ENCODE measurements at regions of chr1 and their contacts with region 1.

Region 1: GRCh38 chr1:109112652-109113285 is 1.1 kb upstream of the ELAPOR1 start:
- DNase-seq: peak; percentile 80 to 84
- ATAC-seq: peak; percentile 94 to 98
- H3K4me3 ChIP-seq: peak overlapping the region; percentile 37
- H3K27ac ChIP-seq: peak overlapping the region; percentile 16 to 71; a peak in 2 of 6 replicates
- H3K4me1 ChIP-seq: peaks cover 17% of the 10 kb centered on the region; the same call in 2 of the 3 replicates
- CTCF ChIP-seq: peak; percentile 80
- EP300 ChIP-seq: no peak
- POLR2A ChIP-seq: no peak
- RAD21 ChIP-seq: peak; percentile 59 to 60

Region 2: GRCh38 chr1:109090196-109091077 is 22.3 kb before region 1 on chr1 and contains the start of gene TMEM167B:
- CTCF ChIA-PET with region 1: interaction called, 12 read pairs
- POLR2A ChIA-PET with region 1: no interaction called
- DNase-seq: peak; percentile 62 to 93
- ATAC-seq: peak; percentile 92 to 94
- H3K4me3 ChIP-seq: peak within 1 kb of the TSS; percentile 78
- H3K27ac ChIP-seq: peak within 1 kb of the TSS; percentile 95
- H3K4me1 ChIP-seq: peaks cover 12% of the 10 kb centered on the region
- CTCF ChIP-seq: no peak
- EP300 ChIP-seq: no peak
- POLR2A ChIP-seq: peak; percentile 41
- RAD21 ChIP-seq: no peak
- polyA plus RNA-seq, gene TMEM167B: 10.9 and 13.2 TPM in 2 replicates

Region 3: DNA sequence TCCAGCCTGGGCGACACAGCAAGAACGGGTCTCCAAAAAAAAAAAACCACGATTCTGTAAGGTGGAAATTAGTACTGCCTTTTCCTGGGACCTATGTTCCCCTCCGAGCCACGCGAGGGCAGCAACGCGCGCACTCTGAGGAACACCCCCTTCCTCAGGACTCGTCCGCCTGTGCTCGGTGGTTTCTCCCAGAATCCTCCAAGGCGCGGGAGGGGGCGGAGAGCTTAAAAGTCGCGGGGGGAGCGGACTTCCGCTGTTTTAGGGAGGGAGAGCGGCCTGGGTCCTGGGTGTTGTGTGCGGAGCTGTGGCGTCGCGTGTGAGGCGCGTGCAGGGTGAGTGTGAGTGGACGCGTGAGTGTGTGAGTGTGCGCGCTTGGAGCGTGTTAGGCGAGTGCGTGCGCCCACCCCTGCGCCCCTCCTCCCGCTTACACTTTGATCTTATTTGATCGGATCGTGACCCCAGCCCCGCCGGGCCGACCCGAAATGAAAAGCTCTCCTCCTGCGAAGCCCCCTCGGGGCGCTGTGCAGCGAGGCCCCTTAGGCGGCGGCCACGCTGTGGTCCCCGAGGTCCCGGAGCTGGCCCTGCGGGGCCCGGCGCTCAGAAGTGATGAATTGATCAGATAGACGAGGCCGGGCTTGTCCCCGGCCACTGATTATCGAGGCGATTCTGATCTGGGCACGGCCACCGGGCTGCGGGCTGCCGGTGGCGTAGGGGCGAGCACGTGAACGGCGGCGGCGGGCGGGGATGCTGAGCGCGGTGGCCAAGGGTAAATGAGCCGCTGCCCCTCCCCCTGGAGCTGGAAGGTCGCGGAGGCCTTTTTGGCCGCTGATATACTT is 12.6 kb before region 1 on chr1:
- CTCF ChIA-PET with region 1: interaction called, 50 read pairs
- POLR2A ChIA-PET with region 1: interaction called, 30 read pairs
- DNase-seq: peak; percentile 80 to 97
- ATAC-seq: peak; percentile 97 to 98
- H3K4me3 ChIP-seq: peak overlapping the region; percentile 93
- H3K27ac ChIP-seq: peak overlapping the region; percentile 93 to 94
- H3K4me1 ChIP-seq: peaks cover 9% of the 10 kb centered on the region
- CTCF ChIP-seq: peak; percentile 62
- EP300 ChIP-seq: no peak
- POLR2A ChIP-seq: peak; percentile 98
- RAD21 ChIP-seq: peak; percentile 36 to 53; a peak in 4 of 5 replicates

Region 4: GRCh38 chr1:109133815-109134214 is 21.0 kb after region 1 on chr1:
- CTCF ChIA-PET with region 1: interaction called, 11 read pairs
- POLR2A ChIA-PET with region 1: no interaction called
- DNase-seq: no peak
- ATAC-seq: no peak
- H3K4me3 ChIP-seq: no peak overlapping the region
- H3K27ac ChIP-seq: no peak overlapping the region
- H3K4me1 ChIP-seq: no peaks in the 10 kb centered on the region
- CTCF ChIP-seq: no peak
- EP300 ChIP-seq: no peak
- POLR2A ChIP-seq: no peak
- RAD21 ChIP-seq: no peak

Region 5: DNA sequence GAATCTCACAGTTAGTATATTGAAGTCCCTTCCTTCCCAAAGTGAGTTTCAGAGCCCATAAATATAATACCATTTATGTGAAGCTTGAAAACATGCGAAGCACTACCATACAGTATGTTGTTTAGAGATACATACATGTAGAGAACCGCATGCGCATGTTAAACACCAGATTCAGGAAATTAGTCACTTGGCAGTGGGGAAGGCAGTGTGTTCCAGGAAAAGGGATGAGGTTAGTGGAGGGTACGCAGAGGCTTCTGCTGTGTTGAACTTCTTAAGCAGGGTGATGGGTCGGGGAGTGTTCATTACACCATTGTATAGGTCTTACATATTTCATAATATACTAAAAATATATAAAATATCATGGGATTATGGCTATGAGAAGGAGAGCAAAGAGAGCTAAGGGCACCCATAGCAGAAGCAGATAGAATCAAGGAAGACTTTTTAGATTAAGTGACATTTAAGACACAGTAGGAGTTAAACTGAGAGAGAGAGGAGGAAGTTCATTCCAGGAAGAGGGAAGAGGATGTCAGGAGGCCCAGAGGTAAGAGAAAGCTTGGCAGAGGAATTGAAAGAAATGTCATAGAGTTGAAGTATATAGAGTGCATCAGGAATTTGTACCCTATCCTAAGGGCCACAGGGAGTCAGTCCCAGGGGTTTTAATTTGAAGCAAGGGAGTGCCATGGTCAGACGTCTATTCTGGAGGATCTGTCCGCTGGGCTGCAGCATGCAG is 57.4 kb after region 1 on chr1:
- CTCF ChIA-PET with region 1: interaction called, 12 read pairs
- POLR2A ChIA-PET with region 1: no interaction called
- DNase-seq: no peak
- ATAC-seq: no peak
- H3K4me3 ChIP-seq: no peak overlapping the region
- H3K27ac ChIP-seq: no peak overlapping the region
- H3K4me1 ChIP-seq: no peaks in the 10 kb centered on the region
- CTCF ChIP-seq: no peak
- EP300 ChIP-seq: no peak
- POLR2A ChIP-seq: no peak
- RAD21 ChIP-seq: no peak

Region 6: GRCh38 chr1:109181105-109181806 is 68.5 kb after region 1 on chr1:
- CTCF ChIA-PET with region 1: interaction called, 11 read pairs
- POLR2A ChIA-PET with region 1: no interaction called
- DNase-seq: peak; percentile 69 to 89
- ATAC-seq: peak; percentile 88 to 92
- H3K4me3 ChIP-seq: no peak overlapping the region
- H3K27ac ChIP-seq: peak overlapping the region; percentile 72 to 81
- H3K4me1 ChIP-seq: peaks cover 35% of the 10 kb centered on the region
- CTCF ChIP-seq: no peak
- EP300 ChIP-seq: no peak
- POLR2A ChIP-seq: no peak
- RAD21 ChIP-seq: no peak

Region 7: DNA sequence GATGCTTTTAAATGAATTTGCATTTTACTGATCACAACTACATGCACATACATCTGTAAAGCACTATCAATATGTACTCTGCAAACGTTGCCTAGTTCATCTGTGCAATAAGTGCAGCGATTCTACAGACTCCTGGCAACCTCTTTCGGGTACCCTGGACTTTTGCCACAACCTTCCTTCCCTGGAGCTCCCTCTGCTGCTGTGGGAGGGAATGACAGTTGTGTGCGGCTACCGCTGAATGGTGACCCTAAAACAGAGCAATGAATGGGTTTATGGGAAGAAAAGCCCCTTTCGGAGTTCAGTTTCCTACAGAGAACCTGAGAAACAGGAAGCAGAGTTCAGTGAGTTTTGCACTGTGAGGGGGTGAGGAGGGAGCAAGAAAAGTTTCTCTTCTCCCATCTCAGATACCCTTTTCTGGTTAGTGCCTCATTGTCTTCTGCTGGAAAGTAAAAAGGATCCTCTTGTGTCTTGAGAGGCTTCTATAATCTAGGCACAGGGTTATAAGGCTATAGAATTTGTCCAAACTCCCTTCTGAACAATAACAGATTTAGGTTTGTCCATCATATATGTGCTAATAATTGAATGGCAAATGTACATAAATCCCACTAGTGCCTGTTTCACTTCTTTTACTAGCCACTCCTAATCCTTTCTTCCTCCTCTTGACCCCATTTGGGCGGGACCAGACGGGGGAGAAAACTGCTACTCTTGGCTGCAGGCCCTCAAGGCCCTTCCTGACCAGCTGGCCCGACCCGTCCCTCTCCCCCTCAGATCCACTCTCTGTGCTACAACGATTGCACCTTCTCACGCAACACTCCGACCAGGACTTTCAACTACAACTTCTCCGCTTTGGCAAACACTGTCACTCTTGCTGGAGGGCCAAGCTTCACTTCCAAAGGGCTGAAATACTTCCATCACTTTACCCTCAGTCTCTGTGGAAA is 81.2 kb after region 1 on chr1:
- CTCF ChIA-PET with region 1: interaction called, 20 read pairs
- POLR2A ChIA-PET with region 1: interaction called, 4 read pairs
- DNase-seq: peak; percentile 35 to 67
- ATAC-seq: peak in 1 of 2 experiments; percentile 65; a peak in 3 of 6 replicates
- H3K4me3 ChIP-seq: no peak overlapping the region
- H3K27ac ChIP-seq: peak overlapping the region in 1 of 2 experiments; percentile 15; a peak in 1 of 6 replicates
- H3K4me1 ChIP-seq: peaks cover 30% of the 10 kb centered on the region
- CTCF ChIP-seq: peak; percentile 71
- EP300 ChIP-seq: no peak
- POLR2A ChIP-seq: no peak
- RAD21 ChIP-seq: peak; percentile 73 to 74

Measured in A549 (cell line).